ENCODE measurements at regions of chr10 and their contacts with region 1.

Region 1: GRCh38 chr10:88810196-88810961 is 7.8 kb downstream of the LIPM start:
- DNase-seq: no peak
- ATAC-seq: peak in 1 of 4 donors; percentile 55
- H3K4me3 ChIP-seq: no peak overlapping the region
- H3K27ac ChIP-seq: no peak overlapping the region
- H3K4me1 ChIP-seq: no peaks in the 10 kb centered on the region
- H3K27me3 ChIP-seq: peaks cover 0 to 9% (median 0%) of the 10 kb centered on the region in 3 donors
- CTCF ChIP-seq: peak; percentile 51

Region 2: GRCh38 chr10:88687853-88688467 is 122.4 kb before region 1 on chr10:
- intact Hi-C with region 1: loop called in 1 of 2 experiments (anchors 10 kb)
- DNase-seq: no peak
- ATAC-seq: no peak
- H3K4me3 ChIP-seq: no peak overlapping the region
- H3K27ac ChIP-seq: no peak overlapping the region
- H3K4me1 ChIP-seq: no peaks in the 10 kb centered on the region
- H3K27me3 ChIP-seq: peaks cover 0 to 2% (median 0%) of the 10 kb centered on the region in 3 donors
- CTCF ChIP-seq: peak; percentile 57

Region 3: DNA sequence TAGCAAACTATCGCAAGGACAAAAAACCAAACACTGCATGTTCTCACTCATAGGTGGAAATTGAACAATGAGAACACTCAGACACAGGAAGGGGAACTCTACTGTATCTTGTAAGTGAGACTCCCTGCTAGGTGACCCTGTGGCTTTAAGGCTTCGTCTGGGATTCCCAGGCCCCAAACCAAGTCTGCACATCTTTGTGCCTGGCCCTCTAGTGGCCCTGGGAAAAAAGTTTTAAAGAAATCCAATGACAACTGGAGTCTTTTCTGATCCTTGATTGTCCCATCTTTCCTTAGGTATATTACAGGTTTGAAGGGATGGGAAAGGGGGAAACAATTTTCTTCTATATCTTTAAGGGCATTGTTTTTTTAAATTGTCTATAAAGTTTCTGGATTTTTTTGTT is 18.5 kb before region 1 on chr10:
- intact Hi-C with region 1: no loop called
- DNase-seq: no peak
- ATAC-seq: peak in 1 of 4 donors; percentile 33
- H3K4me3 ChIP-seq: no peak overlapping the region
- H3K27ac ChIP-seq: no peak overlapping the region
- H3K4me1 ChIP-seq: no peaks in the 10 kb centered on the region
- H3K27me3 ChIP-seq: no peaks in the 10 kb centered on the region
- CTCF ChIP-seq: peak; percentile 32

Region 4: DNA sequence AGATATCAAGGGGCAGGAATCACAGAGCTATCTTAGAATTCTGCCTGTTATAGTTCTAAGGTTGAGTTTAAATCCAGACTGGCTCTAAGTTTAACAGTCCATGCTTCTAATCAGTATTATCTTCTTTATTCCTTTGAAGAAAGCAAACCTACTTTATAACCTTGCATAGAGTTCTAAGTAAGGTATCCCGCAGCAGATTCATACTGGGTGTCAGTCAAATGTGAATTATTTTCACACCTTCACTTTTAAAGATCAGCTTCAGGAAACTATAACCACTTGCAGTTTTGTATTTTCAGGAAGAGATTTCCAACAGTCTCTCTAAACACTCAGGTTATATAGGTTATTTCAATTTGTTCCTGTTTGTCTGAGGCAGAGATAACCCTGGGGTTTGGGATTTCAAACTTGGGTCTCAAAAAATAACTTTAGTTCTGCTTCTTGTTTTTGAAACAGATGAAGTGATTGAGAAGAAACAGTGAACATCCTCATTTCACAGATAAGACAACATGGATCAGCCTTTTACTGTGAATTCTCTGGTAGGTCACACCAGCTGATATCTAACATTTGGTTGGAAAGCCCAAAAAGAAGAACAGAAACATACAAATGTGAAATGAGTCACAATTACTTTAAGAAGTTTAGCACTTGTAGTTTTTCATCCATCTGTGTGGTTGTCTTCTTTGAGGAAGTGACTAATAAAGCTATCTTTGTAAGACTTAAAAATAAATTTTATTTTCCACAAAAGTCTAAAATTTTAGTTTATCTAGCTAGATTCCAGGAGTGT is 91.0 kb after region 1 on chr10:
- intact Hi-C with region 1: no loop called
- DNase-seq: no peak
- ATAC-seq: no peak
- H3K4me3 ChIP-seq: no peak overlapping the region
- H3K27ac ChIP-seq: no peak overlapping the region
- H3K4me1 ChIP-seq: no peaks in the 10 kb centered on the region
- H3K27me3 ChIP-seq: no peaks in the 10 kb centered on the region
- CTCF ChIP-seq: no peak

Region 5: GRCh38 chr10:88944813-88945212 is 134.4 kb after region 1 on chr10:
- intact Hi-C with region 1: no loop called
- DNase-seq: no peak
- ATAC-seq: no peak
- H3K4me3 ChIP-seq: no peak overlapping the region
- H3K27ac ChIP-seq: no peak overlapping the region
- H3K4me1 ChIP-seq: no peaks in the 10 kb centered on the region
- H3K27me3 ChIP-seq: peaks cover 0 to 2% (median 0%) of the 10 kb centered on the region in 3 donors
- CTCF ChIP-seq: no peak